Caco-2 (cell line): ENCODE measurements at regions of chr10 and their contacts with region 1.

Region 1: DNA sequence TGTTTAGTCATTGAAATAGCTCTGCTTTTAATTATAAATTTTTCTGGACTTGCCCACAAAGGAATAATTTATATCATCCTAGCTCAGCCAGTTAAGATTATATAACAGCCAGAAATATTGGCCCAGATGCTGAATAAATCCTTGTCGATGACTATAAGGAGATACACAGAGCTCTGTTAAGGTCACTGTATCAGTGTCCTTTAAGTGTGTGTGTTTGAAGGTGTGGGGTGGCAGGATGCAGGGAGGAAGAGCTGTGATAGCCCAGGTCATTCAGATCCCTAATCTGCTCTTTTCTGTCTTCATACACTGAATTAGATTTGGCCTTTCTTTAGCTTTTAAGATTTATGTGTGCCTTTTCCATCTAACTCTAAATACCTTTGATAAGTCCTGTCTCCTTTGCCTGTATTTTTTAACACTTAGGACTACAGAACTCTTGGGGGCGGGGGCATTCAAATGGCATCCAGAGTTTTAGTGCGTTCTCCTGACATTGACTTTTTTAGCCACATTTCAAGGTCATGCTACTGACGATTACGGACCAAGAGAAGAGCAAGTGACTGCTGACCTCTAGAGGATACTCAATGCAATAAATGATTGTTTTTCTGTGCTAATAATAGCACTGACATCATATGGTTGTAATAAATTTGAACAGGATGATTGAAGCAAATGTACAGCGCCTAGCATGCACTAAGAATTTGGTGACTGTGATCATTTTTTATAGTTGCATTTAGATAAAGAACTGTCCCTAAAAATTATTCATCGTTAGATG is 172.3 kb downstream of the CACNB2 start:
- DNase-seq: peak in 1 of 2 experiments; percentile 29
- H3K4me3 ChIP-seq: no peak overlapping the region
- H3K4me3 Mint-ChIP-seq: no peak overlapping the region
- H3K27ac Mint-ChIP-seq: no peak overlapping the region
- H3K4me1 ChIP-seq: no peaks in the 10 kb centered on the region
- H3K4me1 Mint-ChIP-seq: no peaks in the 10 kb centered on the region
- H3K27me3 ChIP-seq: peaks cover 2% of the 10 kb centered on the region
- H3K27me3 Mint-ChIP-seq: peaks cover 15% of the 10 kb centered on the region
- CTCF ChIP-seq: peak; percentile 46 to 71

Region 2: DNA sequence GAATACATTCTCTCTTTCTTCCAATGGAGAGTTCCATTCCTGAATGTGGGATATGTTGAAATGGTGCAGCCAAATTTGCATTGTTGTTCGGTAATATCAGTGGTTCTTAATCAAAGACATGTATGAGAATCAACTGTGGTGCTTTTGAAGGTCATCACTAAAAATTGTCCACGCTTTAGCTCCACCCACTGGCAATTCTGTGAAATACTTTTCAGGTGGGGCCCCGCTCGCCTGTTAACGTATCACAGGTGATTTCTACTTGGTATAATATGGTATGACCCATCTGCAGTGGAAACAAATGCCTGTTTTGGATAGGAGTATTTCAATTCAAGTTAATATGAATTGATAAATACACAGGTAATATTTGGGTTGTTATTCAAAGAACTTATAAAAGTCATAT is 160.4 kb after region 1 on chr10:
- CTCF ChIA-PET with region 1: no interaction called
- POLR2A ChIA-PET with region 1: no interaction called
- intact Hi-C with region 1: loop called (anchors 10 kb)
- DNase-seq: peak in 1 of 2 experiments; percentile 44
- H3K4me3 ChIP-seq: no peak overlapping the region
- H3K4me3 Mint-ChIP-seq: no peak overlapping the region
- H3K27ac Mint-ChIP-seq: no peak overlapping the region
- H3K4me1 ChIP-seq: no peaks in the 10 kb centered on the region
- H3K4me1 Mint-ChIP-seq: no peaks in the 10 kb centered on the region
- H3K27me3 ChIP-seq: no peaks in the 10 kb centered on the region
- H3K27me3 Mint-ChIP-seq: no peaks in the 10 kb centered on the region
- CTCF ChIP-seq: peak; percentile 38 to 40

Region 3: DNA sequence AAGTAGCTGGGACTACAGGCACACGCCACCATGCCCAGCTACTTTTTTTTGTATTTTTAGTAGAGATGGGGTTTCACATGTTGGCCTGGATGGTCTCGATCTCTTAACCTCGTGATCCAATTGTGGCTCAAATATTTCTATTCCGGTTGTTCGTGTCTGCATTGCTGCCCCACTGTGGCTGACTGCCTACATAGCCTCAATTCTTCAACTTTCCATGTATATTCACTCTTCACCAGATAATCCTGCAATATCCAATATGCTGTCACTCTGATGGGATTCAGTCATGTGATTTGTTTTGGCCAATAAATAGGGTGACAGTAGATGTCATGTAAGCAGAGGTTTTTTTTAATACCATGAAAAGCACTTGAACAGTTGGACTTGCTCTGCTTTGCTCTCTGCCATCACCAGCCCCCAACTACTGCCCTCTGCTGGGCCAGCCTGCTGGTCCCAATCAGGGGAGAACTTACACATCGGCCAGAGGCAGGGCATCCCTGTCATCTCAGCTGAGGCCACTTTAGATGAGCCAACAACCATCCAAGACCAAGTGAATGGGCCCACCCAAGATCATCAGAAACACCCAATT is 282.1 kb after region 1 on chr10:
- CTCF ChIA-PET with region 1: no interaction called
- POLR2A ChIA-PET with region 1: no interaction called
- intact Hi-C with region 1: no loop called
- DNase-seq: peak; percentile 56 to 58
- H3K4me3 ChIP-seq: no peak overlapping the region
- H3K4me3 Mint-ChIP-seq: no peak overlapping the region
- H3K27ac Mint-ChIP-seq: no peak overlapping the region
- H3K4me1 ChIP-seq: no peaks in the 10 kb centered on the region
- H3K4me1 Mint-ChIP-seq: no peaks in the 10 kb centered on the region
- H3K27me3 ChIP-seq: no peaks in the 10 kb centered on the region
- H3K27me3 Mint-ChIP-seq: no peaks in the 10 kb centered on the region
- CTCF ChIP-seq: peak in 1 of 2 experiments; percentile 47